GM10248 (cell line): ENCODE measurements at regions of chr2 and their contacts with region 1.

Region 1: GRCh38 chr2:74080346-74080745 is 67.4 kb downstream of the BOLA3 start:
- DNase-seq: peak; percentile 53
- CTCF ChIP-seq: peak; percentile 36

Region 2: GRCh38 chr2:74092275-74092674 is 11.9 kb after region 1 on chr2:
- CTCF ChIA-PET with region 1: no interaction called
- POLR2A ChIA-PET with region 1: no interaction called
- DNase-seq: no peak
- CTCF ChIP-seq: no peak

Region 3: DNA sequence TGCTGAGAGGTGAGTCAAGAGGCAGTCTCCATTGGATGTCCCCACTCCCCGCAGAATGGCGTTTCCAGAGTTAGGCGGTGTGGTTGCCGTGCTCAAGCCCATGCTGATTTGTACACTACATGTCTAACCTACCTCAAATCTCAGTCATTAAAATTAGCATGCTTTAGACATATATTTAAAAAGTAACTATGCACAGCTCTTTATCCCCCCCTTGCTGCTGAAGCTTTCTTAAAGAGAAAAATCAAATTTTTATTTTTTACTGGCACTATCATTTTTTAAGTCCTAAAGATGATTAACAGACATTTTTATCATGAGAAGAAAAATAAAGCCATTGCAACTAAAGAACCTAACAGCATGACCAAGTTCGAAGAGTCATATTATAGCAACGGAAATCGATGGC is 24.5 kb after region 1 on chr2:
- CTCF ChIA-PET with region 1: interaction called, 12 read pairs
- POLR2A ChIA-PET with region 1: no interaction called
- DNase-seq: no peak
- CTCF ChIP-seq: no peak